GM23248 (cell line): ENCODE measurements at regions of chr7 and their contacts with region 1.

Region 1: GRCh38 chr7:139645572-139646523 is 122.4 kb downstream of the CLEC2L start:
- DNase-seq: peak; percentile 85
- H3K4me3 ChIP-seq: no peak overlapping the region
- H3K27ac ChIP-seq: no peak overlapping the region
- H3K4me1 ChIP-seq: no peaks in the 10 kb centered on the region
- H3K27me3 ChIP-seq: no peaks in the 10 kb centered on the region

Region 2: DNA sequence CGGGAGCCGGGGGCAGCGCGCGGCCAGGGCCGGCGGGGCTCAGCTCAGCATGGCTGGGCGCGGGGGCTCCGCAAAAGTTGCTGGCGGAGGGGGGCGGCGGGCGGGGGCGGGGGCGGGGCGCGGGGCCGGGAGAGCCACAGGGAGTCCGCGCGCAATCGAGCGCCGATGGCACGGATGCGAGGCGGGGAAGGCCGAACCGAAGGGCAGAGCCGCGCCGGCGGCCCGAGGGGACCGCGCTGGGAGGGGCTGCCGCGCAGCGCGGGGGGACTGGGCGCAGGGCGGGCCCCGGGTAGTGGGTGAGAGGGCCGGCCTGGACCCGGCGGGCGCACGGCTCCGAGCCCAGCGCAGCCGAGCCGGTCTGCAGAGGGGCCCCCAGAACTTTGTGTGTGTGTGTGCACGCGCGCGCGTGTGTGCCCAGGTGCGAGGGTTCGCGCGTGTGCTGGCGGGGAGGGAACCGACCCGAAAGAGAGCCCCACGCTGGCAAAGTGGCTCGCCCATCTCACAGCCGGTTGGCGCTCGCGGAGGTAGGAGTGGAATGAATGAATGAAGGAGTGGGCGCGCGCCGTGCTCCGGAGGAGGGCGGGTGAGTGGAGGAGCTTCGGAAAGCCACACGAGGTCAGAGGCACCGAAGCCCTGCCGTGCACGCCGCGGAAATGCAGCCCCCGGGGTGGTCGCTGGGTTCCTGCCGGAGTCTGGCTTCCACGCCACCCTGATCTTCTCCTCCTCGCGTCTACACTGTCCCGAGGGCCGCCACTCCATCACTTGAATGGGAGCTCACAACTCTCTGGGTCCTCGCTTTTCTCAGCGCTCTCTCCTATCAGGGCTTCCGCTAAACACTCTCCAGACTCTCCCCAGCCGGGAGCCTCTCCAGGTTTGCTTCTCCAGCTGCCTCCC is 132.3 kb after region 1 on chr7 and contains the start of gene HIPK2:
- in situ Hi-C with region 1: loop called (anchors 10 kb)
- DNase-seq: peak; percentile 87
- H3K4me3 ChIP-seq: peak within 1 kb of the TSS; percentile 98
- H3K27ac ChIP-seq: peak within 1 kb of the TSS; percentile 88
- H3K4me1 ChIP-seq: peaks cover 25% of the 10 kb centered on the region
- H3K27me3 ChIP-seq: no peaks in the 10 kb centered on the region
- total RNA-seq, gene HIPK2: 7.9 and 9.1 TPM in 2 replicates

Region 3: GRCh38 chr7:140003913-140004382 is 358.1 kb after region 1 on chr7:
- in situ Hi-C with region 1: loop called (anchors 5 kb)
- DNase-seq: peak; percentile 82
- H3K4me3 ChIP-seq: no peak overlapping the region
- H3K27ac ChIP-seq: no peak overlapping the region
- H3K4me1 ChIP-seq: no peaks in the 10 kb centered on the region
- H3K27me3 ChIP-seq: no peaks in the 10 kb centered on the region

Region 4: GRCh38 chr7:140326116-140326928 is 680.5 kb after region 1 on chr7:
- in situ Hi-C with region 1: loop called (anchors 25 kb)
- DNase-seq: peak; percentile 85
- H3K4me3 ChIP-seq: peak overlapping the region; percentile 58
- H3K27ac ChIP-seq: no peak overlapping the region
- H3K4me1 ChIP-seq: 0 out of 2 replicates have a peak, but pooled peaks cover 5% of the 10 kb centered on the region
- H3K27me3 ChIP-seq: no peaks in the 10 kb centered on the region